Transverse colon (tissue), 4 donors: ENCODE measurements at regions of chr9 and their contacts with region 1.

Region 1: GRCh38 chr9:124606027-124606426 is 98.8 kb upstream of the NR5A1 start:
- DNase-seq: no peak
- H3K4me3 ChIP-seq: no peak overlapping the region
- H3K27ac ChIP-seq: no peak overlapping the region
- H3K4me1 ChIP-seq: no peaks in the 10 kb centered on the region
- H3K27me3 ChIP-seq: no peaks in the 10 kb centered on the region
- CTCF ChIP-seq: no peak
- EP300 ChIP-seq: no peak
- POLR2A ChIP-seq: no peak

Region 2: GRCh38 chr9:124551472-124552272 is 54.4 kb before region 1 on chr9:
- in situ Hi-C with region 1: no loop called
- intact Hi-C with region 1: loop called (anchors 2 kb)
- DNase-seq: peak; percentile 42
- H3K4me3 ChIP-seq: no peak overlapping the region
- H3K27ac ChIP-seq: no peak overlapping the region
- H3K4me1 ChIP-seq: peaks cover 5 to 23% (median 7%) of the 10 kb centered on the region in 4 donors
- H3K27me3 ChIP-seq: no peaks in the 10 kb centered on the region
- CTCF ChIP-seq: peak; percentile 42 to 58 (median 54)
- EP300 ChIP-seq: no peak
- POLR2A ChIP-seq: no peak

Region 3: GRCh38 chr9:124754289-124754688 is 148.3 kb after region 1 on chr9:
- in situ Hi-C with region 1: no loop called
- intact Hi-C with region 1: no loop called
- DNase-seq: no peak
- H3K4me3 ChIP-seq: no peak overlapping the region
- H3K27ac ChIP-seq: no peak overlapping the region
- H3K4me1 ChIP-seq: peaks cover 0 to 10% (median 0%) of the 10 kb centered on the region in 4 donors
- H3K27me3 ChIP-seq: peaks cover 19% of the 10 kb centered on the region
- CTCF ChIP-seq: peak in 3 of 5 experiments; percentile 30 to 34 (median 32)
- EP300 ChIP-seq: no peak
- POLR2A ChIP-seq: no peak